Colonic mucosa (tissue), 4 donors: ENCODE measurements at regions of chr2 and their contacts with region 1.

Region 1: GRCh38 chr2:60707750-60708371 is 48.2 kb upstream of the PAPOLG start:
- DNase-seq: no peak
- H3K4me3 ChIP-seq: no peak overlapping the region
- H3K27ac ChIP-seq: no peak overlapping the region
- H3K4me1 ChIP-seq: no peaks in the 10 kb centered on the region
- H3K27me3 ChIP-seq: no peaks in the 10 kb centered on the region
- CTCF ChIP-seq: peak; percentile 74

Region 2: DNA sequence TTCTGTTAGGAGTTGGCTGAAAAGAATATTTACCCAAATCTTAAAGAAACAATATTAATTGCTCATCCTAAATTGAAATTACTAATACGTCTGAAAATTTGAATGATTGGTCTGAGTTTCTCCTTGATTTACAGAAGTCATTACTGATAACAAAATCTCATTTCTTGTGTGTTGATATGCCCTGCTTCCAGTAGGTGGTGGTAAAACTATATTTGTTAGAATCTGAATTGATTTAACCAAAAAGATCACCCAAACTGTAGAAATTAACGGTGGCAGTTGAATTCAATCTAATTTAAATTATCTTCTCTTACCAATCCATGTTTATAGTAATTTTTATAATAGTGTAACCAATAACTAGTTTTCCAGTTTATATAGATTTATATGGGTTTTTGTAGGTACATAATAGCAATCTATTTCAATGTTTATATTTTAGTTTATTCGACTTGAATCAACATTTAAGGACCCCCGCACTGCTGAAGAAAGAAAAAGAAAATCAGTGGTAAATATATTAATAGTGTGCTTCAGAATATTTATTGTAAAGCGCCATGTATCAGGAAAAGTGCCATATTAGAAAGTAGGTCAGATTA is 86.5 kb after region 1 on chr2:
- intact Hi-C with region 1: loop called (anchors 10 kb)
- DNase-seq: no peak
- H3K4me3 ChIP-seq: no peak overlapping the region
- H3K27ac ChIP-seq: no peak overlapping the region
- H3K4me1 ChIP-seq: no peaks in the 10 kb centered on the region
- H3K27me3 ChIP-seq: no peaks in the 10 kb centered on the region
- CTCF ChIP-seq: peak; percentile 45